Activated B cell treated with CpG ODN at 0.5 μM for 24 hours (primary cell): ENCODE measurements at regions of chr2 and their contacts with region 1.

Region 1: GRCh38 chr2:233369897-233370685 is 15.8 kb downstream of the DGKD start:
- DNase-seq: no peak
- ATAC-seq: peak; percentile 54
- H3K4me3 Mint-ChIP-seq: peak overlapping the region; percentile 44
- H3K27ac Mint-ChIP-seq: peak overlapping the region; percentile 72
- H3K4me1 Mint-ChIP-seq: peaks cover 80% of the 10 kb centered on the region
- H3K27me3 Mint-ChIP-seq: no peaks in the 10 kb centered on the region
- CTCF ChIP-seq: no peak

Region 2: GRCh38 chr2:233297076-233297475 is 73.0 kb before region 1 on chr2:
- CTCF ChIA-PET with region 1: no interaction called
- POLR2A ChIA-PET with region 1: interaction called, 10 read pairs
- intact Hi-C with region 1: no loop called
- DNase-seq: no peak
- ATAC-seq: no peak
- H3K4me3 Mint-ChIP-seq: no peak overlapping the region
- H3K27ac Mint-ChIP-seq: no peak overlapping the region
- H3K4me1 Mint-ChIP-seq: no peaks in the 10 kb centered on the region
- H3K27me3 Mint-ChIP-seq: no peaks in the 10 kb centered on the region
- CTCF ChIP-seq: no peak

Region 3: DNA sequence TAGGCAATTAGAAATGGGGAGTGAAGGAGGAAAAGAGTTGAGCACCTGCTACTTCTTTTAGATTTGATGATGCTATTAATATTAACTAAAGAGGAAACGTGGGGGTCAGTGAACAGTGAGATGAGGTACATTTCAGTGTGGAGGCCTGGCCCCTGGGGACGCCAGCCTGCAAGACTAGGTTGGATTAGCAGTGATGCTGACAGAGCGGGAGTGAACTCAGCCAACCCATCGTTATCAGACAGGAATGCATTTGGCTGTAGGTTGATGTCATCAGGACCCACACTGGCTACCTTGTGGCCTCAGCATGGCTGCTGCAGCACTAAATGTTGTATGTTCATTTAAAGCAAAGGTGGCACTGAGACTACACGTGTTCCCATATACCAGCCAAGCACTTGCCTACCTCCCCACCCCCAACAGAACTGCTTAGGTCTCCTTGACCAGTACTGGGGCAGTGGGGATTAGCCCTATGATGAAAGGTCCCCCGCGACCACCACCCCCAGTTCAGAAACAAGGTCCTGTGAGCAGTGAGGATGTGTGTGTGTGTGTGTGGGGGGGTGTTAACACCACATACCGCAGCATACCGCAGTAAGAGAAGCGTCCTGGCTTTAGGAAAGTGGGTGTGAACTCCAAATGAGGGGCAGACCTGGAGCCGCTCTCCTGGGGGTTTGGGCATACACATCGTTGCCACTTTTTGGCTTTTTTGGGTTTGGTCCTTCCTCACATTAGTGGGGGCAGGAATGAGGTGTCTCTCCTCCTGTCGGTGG is 10.2 kb after region 1 on chr2:
- CTCF ChIA-PET with region 1: no interaction called
- POLR2A ChIA-PET with region 1: interaction called, 4 read pairs
- intact Hi-C with region 1: loop called (anchors 1 kb)
- DNase-seq: peak; percentile 50
- ATAC-seq: peak; percentile 83
- H3K4me3 Mint-ChIP-seq: peak overlapping the region; percentile 67
- H3K27ac Mint-ChIP-seq: peak overlapping the region; percentile 91
- H3K4me1 Mint-ChIP-seq: peaks cover 83% of the 10 kb centered on the region
- H3K27me3 Mint-ChIP-seq: no peaks in the 10 kb centered on the region
- CTCF ChIP-seq: no peak

Region 4: DNA sequence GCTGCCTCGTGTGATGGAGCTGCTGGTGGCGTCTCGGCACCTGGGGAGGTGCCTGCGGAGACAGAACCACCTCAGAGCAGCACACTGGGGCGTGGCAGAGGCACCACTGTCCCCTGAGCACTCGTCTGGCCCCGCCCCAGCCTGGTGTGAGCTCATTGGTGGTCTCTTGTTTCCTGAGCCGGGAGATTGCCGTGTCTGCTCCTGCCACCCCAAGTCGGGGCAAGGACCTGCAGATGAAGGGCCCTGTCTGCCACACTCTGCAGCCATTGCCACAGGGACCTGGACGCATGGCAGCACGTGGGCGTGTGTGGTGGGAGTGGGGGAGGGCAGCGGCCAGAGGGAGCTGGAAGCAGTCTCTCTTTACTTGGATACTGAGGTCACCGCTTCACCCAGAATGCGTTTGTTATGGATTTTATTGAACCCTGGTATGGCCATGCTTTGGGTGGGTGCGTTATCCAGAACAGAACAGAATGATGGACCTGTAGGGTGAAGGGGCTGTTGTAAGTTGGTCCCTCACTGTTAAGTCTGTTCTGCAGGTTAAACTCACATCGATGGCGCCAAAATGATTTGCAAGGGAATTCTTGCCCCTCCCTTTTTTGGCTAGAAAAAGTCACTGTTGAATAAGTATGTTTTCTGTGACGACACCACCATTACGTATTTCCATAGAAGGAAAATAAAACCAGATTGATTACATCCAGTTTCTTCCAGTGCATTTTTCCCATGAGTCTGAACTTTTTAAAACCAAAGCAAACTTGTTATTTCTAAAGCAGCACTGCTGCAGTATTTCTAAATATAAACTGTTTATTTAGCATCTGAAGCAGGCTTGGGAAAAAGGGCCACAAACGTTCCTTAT is 104.4 kb after region 1 on chr2:
- CTCF ChIA-PET with region 1: no interaction called
- POLR2A ChIA-PET with region 1: no interaction called
- intact Hi-C with region 1: no loop called
- DNase-seq: no peak
- ATAC-seq: no peak
- H3K4me3 Mint-ChIP-seq: no peak overlapping the region
- H3K27ac Mint-ChIP-seq: no peak overlapping the region
- H3K4me1 Mint-ChIP-seq: no peaks in the 10 kb centered on the region
- H3K27me3 Mint-ChIP-seq: no peaks in the 10 kb centered on the region
- CTCF ChIP-seq: no peak